Endothelial cell of umbilical vein (primary cell): ENCODE measurements at regions of chr14 and their contacts with region 1.

Region 1: GRCh38 chr14:73728717-73729330 is 14.6 kb upstream of the PNMA1 start:
- DNase-seq: peak; percentile 88
- H3K4me3 ChIP-seq: no peak overlapping the region
- H3K27ac ChIP-seq: peak overlapping the region; percentile 70
- H3K4me1 ChIP-seq: peaks cover 51% of the 10 kb centered on the region
- H3K27me3 ChIP-seq: no peaks in the 10 kb centered on the region
- CTCF ChIP-seq: peak; percentile 90 to 91
- POLR2A ChIP-seq: no peak

Region 2: DNA sequence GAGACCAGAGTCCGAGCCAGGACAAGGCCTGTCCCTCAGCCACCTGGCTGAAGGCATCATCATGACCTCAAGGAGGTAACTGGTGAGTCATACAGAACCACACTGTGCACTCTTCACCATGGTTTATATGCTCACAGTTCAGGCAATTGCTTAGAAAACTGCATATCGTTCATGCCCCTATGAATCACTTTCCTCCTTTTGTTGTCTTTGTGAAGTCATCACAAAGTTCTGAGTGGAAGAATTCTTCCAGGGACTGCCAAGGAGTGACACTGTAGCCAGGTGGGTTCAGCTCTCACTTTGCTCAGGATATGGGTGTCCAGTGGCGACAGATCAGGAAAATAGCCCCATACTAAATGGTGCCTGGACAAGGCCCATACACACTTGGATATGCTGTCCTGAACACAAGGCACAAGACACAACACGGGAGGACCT is 927.4 kb before region 1 on chr14:
- CTCF ChIA-PET with region 1: no interaction called
- POLR2A ChIA-PET with region 1: no interaction called
- dilution Hi-C with region 1: no loop called
- intact Hi-C with region 1: no loop called
- DNase-seq: peak; percentile 93
- H3K4me3 ChIP-seq: no peak overlapping the region
- H3K27ac ChIP-seq: peak overlapping the region; percentile 95
- H3K4me1 ChIP-seq: peaks cover 22% of the 10 kb centered on the region
- H3K27me3 ChIP-seq: no peaks in the 10 kb centered on the region
- CTCF ChIP-seq: no peak
- POLR2A ChIP-seq: no peak

Region 3: DNA sequence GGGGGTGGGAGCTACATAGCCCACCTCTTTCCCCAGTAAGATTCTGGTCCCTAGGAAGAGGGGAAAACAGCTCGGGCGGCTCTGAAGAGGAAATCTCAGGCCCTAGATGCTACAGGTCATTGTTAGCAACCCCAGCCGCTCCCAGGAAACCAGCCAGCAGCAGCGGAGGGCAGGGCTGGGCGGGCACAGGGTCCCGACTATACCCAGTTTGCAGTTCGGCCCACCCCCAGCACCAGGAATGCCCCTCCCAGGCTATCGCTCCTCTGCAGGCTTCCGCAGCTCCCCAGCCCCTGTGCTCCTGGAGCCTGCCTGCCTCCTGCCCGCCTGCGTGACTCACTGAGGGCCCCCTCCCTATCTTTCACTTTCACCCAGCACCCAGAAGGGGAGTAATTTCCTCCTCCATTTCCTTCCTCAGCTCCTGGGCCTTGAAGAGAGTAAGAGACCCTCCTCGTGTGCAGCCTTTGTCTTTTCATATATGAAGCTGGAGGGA is 12.6 kb after region 1 on chr14:
- CTCF ChIA-PET with region 1: interaction called, 91 read pairs
- POLR2A ChIA-PET with region 1: interaction called, 7 read pairs
- dilution Hi-C with region 1: no loop called
- intact Hi-C with region 1: loop called (anchors 1 kb)
- DNase-seq: peak; percentile 97
- H3K4me3 ChIP-seq: peak overlapping the region in 1 of 3 experiments; percentile 31
- H3K27ac ChIP-seq: peak overlapping the region; percentile 96
- H3K4me1 ChIP-seq: peaks cover 66% of the 10 kb centered on the region
- H3K27me3 ChIP-seq: no peaks in the 10 kb centered on the region
- CTCF ChIP-seq: no peak
- POLR2A ChIP-seq: no peak

Region 4: GRCh38 chr14:73759714-73760597 is 31.1 kb after region 1 on chr14:
- CTCF ChIA-PET with region 1: interaction called, 245 read pairs
- POLR2A ChIA-PET with region 1: no interaction called
- dilution Hi-C with region 1: no loop called
- intact Hi-C with region 1: loop called (anchors 1 kb)
- DNase-seq: peak; percentile 97
- H3K4me3 ChIP-seq: peak overlapping the region; percentile 53 to 60 (median 54)
- H3K27ac ChIP-seq: peak overlapping the region; percentile 96
- H3K4me1 ChIP-seq: peaks cover 53% of the 10 kb centered on the region
- H3K27me3 ChIP-seq: no peaks in the 10 kb centered on the region
- CTCF ChIP-seq: peak in 1 of 2 donors; percentile 11
- POLR2A ChIP-seq: peak; percentile 98

Region 5: DNA sequence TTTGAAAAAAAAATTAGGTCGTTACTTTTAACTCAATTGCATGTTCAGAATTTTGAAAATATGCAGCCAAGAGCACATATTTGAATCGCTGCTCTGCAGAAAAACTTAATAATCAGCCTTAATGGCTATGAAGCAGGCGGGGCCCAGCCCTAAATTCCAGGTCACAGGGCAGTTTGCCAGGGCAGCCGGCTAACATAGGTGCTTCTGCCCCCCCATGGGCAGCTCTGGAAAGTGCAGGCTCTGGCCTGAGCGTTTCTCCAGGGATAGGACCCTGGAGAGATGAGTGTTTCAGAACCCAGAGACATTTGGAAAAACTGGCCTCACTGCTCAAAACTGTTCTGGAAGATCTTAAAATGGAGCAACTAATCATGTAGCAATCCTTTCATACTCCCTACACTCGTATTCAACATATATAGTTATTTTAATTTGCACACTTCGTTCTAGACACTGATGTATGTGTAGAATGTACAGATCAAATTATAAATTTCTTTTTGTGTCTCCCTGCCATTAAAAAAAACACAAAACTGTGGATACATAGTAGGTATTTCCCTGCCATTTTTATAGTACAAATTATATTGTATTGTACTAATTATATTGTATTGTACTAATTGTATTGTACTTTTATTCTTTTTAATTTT is 96.8 kb after region 1 on chr14:
- CTCF ChIA-PET with region 1: interaction called, 131 read pairs
- POLR2A ChIA-PET with region 1: no interaction called
- dilution Hi-C with region 1: no loop called
- intact Hi-C with region 1: loop called (anchors 1 kb)
- DNase-seq: peak; percentile 71
- H3K4me3 ChIP-seq: no peak overlapping the region
- H3K27ac ChIP-seq: no peak overlapping the region
- H3K4me1 ChIP-seq: peaks cover 7% of the 10 kb centered on the region
- H3K27me3 ChIP-seq: no peaks in the 10 kb centered on the region
- CTCF ChIP-seq: peak; percentile 89
- POLR2A ChIP-seq: no peak

Region 6: GRCh38 chr14:73886449-73887317 is 157.9 kb after region 1 on chr14 and contains the start of gene ZNF410:
- CTCF ChIA-PET with region 1: interaction called, 22 read pairs
- POLR2A ChIA-PET with region 1: interaction called, 3 read pairs
- dilution Hi-C with region 1: no loop called
- intact Hi-C with region 1: loop called (anchors 1 kb)
- DNase-seq: peak; percentile 93
- H3K4me3 ChIP-seq: peak within 1 kb of the TSS; percentile 60 to 87 (median 73)
- H3K27ac ChIP-seq: peak within 1 kb of the TSS; percentile 90
- H3K4me1 ChIP-seq: peaks cover 18% of the 10 kb centered on the region
- H3K27me3 ChIP-seq: no peaks in the 10 kb centered on the region
- CTCF ChIP-seq: no peak
- POLR2A ChIP-seq: peak; percentile 45
- total RNA-seq, gene ZNF410: 39.2 and 45.0 TPM in 2 replicates